Activated CD4-positive, alpha-beta T cell treated with anti-CD3 and anti-CD28 coated beads for 36 hours (primary cell): ENCODE measurements at regions of chr7 and their contacts with region 1.

Region 1: DNA sequence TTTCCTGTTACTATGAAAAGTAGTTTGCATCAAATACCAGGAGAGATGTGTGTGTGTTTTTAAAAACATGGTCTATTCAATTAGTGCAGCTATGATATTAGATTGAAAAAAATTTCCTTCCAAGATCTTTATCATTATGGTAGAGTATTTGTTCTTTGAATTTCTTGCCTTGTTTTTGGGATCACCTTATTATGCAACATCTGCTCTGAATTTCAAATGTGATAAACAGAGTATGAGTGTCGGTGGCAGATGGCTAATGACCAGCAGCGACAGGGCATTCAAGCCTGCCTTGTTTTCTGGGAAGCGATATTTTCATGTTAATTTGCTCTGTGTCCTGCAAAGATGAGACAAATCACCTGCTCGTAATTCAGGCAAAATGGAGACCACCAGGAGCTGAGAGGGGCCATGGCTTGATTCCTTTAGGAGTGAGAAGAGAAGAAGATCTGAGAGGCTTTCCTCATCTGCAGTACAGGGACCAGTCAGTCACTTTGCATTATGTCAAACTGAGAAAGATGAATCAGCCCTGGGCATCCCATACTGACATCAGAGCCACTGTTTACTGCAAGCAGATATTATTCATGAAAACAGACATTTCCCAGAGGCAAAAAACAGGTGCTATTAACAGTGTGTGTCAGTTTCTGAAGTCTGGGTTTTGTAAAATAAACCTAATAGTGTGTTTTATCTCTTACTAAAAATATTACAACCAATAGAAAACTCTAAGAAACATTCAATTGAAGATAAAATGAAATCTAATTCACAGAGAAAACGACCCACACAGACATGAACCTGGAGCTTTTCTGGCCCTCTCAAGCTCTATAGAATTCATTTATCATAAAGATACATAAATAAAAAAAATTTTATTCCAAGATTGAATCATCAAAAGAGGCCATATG is 67.6 kb downstream of the CDK6 start:
- DNase-seq: peak; percentile 61
- ATAC-seq: peak; percentile 95
- H3K4me3 Mint-ChIP-seq: peak overlapping the region; percentile 21
- H3K27ac Mint-ChIP-seq: peak overlapping the region; percentile 89
- H3K4me1 Mint-ChIP-seq: peaks cover 67% of the 10 kb centered on the region
- H3K27me3 Mint-ChIP-seq: no peaks in the 10 kb centered on the region

Region 2: DNA sequence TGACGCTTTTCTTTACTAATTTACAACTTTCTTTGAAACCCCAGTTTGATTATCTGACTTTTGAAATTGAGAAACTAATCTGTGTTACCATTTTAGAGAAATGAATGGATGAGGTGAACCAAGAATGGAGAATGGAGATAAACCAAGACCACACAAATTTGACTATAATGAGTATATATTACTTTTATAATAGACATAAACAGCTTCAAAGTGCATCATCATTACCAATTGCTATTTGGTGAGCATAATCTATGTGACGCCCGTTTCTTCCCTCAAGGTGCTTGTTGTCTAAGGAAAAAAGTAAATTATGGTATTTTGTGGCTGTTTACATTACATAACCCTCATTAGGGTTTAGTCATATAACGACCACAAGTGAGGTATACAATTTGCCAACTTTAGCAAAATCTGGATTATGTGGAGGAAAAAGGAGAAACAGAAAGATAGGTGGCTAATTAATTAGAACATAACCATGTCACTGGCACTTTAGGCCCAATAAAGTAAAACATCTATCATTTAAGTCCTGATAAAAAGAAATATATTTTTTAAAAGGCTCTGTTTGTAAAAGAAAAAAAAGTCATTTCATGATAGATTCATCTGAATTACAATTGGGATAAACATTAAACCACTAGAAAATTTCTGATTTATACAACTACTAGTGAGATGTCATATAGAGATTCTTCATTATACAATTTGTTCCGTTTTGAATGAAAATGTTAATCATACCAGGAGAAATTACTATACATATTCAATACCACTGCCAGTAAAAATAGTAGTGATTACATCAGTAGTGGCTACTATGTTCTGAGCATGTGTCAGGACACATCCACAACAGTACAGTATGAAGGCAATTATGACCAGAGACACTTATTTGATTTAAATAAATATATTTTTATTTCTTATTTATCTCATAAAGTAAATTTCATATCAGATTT is 60.4 kb before region 1 on chr7:
- CTCF ChIA-PET with region 1: no interaction called
- POLR2A ChIA-PET with region 1: no interaction called
- intact Hi-C with region 1: loop called (anchors 2 kb)
- DNase-seq: no peak
- ATAC-seq: peak; percentile 84
- H3K4me3 Mint-ChIP-seq: no peak overlapping the region
- H3K27ac Mint-ChIP-seq: peak overlapping the region; percentile 86
- H3K4me1 Mint-ChIP-seq: peaks cover 52% of the 10 kb centered on the region
- H3K27me3 Mint-ChIP-seq: no peaks in the 10 kb centered on the region

Region 3: GRCh38 chr7:93097388-93097787 is 328.6 kb after region 1 on chr7:
- CTCF ChIA-PET with region 1: no interaction called
- POLR2A ChIA-PET with region 1: no interaction called
- intact Hi-C with region 1: no loop called
- DNase-seq: no peak
- ATAC-seq: no peak
- H3K4me3 Mint-ChIP-seq: no peak overlapping the region
- H3K27ac Mint-ChIP-seq: no peak overlapping the region
- H3K4me1 Mint-ChIP-seq: no peaks in the 10 kb centered on the region
- H3K27me3 Mint-ChIP-seq: no peaks in the 10 kb centered on the region